AG04449 (cell line): ENCODE measurements at regions of chr18 and their contacts with region 1.

Region 1: GRCh38 chr18:31555971-31556747 is 35.5 kb upstream of the TTR start:
- DNase-seq: peak; percentile 14
- H3K4me3 ChIP-seq: no peak overlapping the region
- CTCF ChIP-seq: peak; percentile 54

Region 2: GRCh38 chr18:31591628-31592027 is 35.5 kb after region 1 on chr18 and contains the start of gene TTR:
- CTCF ChIA-PET with region 1: no interaction called
- POLR2A ChIA-PET with region 1: no interaction called
- DNase-seq: no peak
- H3K4me3 ChIP-seq: no peak within 1 kb of the TSS
- CTCF ChIP-seq: no peak

Region 3: GRCh38 chr18:31722369-31722957 is 166.3 kb after region 1 on chr18:
- CTCF ChIA-PET with region 1: interaction called, 21 read pairs
- POLR2A ChIA-PET with region 1: no interaction called
- DNase-seq: no peak
- H3K4me3 ChIP-seq: no peak overlapping the region
- CTCF ChIP-seq: peak; percentile 86

Region 4: GRCh38 chr18:31977270-31977872 is 421.2 kb after region 1 on chr18:
- CTCF ChIA-PET with region 1: interaction called, 15 read pairs
- POLR2A ChIA-PET with region 1: no interaction called
- DNase-seq: no peak
- H3K4me3 ChIP-seq: no peak overlapping the region
- CTCF ChIP-seq: peak; percentile 54